ENCODE measurements at regions of chr14 and their contacts with region 1.

Region 1: GRCh38 chr14:61837336-61838229 is 75.4 kb downstream of the SNAPC1 start:
- DNase-seq: peak; percentile 84
- ATAC-seq: peak; percentile 97
- H3K4me3 ChIP-seq: no peak overlapping the region
- H3K4me3 Mint-ChIP-seq: no peak overlapping the region
- H3K27ac ChIP-seq: no peak overlapping the region
- H3K27ac Mint-ChIP-seq: no peak overlapping the region
- H3K4me1 ChIP-seq: peaks cover 0 to 7% of the 10 kb centered on the region in 2 donors
- H3K4me1 Mint-ChIP-seq: no peaks in the 10 kb centered on the region
- H3K27me3 ChIP-seq: no peaks in the 10 kb centered on the region
- H3K27me3 Mint-ChIP-seq: peaks cover 5% of the 10 kb centered on the region
- CTCF ChIP-seq: peak; percentile 93

Region 2: GRCh38 chr14:61456720-61457119 is 380.9 kb before region 1 on chr14:
- CTCF ChIA-PET with region 1: interaction called, 287 read pairs
- POLR2A ChIA-PET with region 1: no interaction called
- intact Hi-C with region 1: loop called (anchors 1 kb)
- DNase-seq: peak; percentile 89
- ATAC-seq: peak; percentile 87
- H3K4me3 ChIP-seq: no peak overlapping the region
- H3K4me3 Mint-ChIP-seq: no peak overlapping the region
- H3K27ac ChIP-seq: no peak overlapping the region
- H3K27ac Mint-ChIP-seq: no peak overlapping the region
- H3K4me1 ChIP-seq: peaks cover 4 to 11% of the 10 kb centered on the region in 2 donors
- H3K4me1 Mint-ChIP-seq: peaks cover 13% of the 10 kb centered on the region
- H3K27me3 ChIP-seq: no peaks in the 10 kb centered on the region
- H3K27me3 Mint-ChIP-seq: no peaks in the 10 kb centered on the region
- CTCF ChIP-seq: peak; percentile 89

Region 3: DNA sequence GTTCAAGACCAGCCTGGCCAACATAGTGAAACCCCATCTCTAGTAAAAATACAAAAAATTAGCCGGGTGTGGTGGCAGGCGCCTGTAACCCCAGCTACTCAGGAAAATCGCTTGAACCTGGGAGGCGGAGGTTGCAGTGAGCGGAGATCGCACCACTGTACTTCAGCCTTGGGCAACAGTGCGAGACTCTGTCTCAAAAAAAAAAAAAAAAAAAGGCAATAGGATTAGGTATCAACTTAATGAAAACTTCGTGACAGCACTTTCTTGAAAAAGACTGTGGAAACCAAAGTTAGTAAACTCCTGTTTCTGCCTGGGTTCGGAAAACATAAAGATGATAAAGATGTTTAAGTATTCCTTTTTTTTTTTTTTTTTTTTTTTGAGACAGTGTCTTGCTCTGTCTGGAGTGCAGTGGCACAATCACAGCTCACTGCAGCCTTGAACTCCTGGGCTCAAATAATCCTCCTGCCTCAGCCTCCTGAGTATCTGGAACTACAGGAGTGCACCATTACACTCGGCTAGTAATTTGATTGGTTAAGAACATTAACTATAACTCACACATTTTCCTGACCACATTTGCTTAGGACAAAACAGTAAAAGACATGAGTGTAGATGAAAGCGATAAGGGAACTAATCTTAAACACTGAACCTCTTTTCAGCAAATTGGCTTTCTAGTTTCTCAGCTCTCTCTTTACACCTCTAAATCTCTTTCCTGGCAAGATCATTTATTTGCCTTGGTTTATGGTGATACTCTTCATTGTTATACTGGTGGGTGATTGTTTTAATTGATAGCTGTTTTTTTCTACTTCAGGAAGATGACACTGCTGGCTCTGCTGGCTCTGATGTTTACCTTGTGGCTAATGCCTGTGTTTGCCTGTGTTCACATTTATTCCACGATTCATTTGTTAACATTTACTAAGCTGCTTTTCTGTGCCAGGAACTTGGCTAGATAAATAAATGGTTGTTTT is 126.4 kb before region 1 on chr14:
- CTCF ChIA-PET with region 1: interaction called, 10 read pairs
- POLR2A ChIA-PET with region 1: no interaction called
- intact Hi-C with region 1: no loop called
- DNase-seq: peak; percentile 32
- ATAC-seq: peak; percentile 60
- H3K4me3 ChIP-seq: no peak overlapping the region
- H3K4me3 Mint-ChIP-seq: peak overlapping the region; percentile 63
- H3K27ac ChIP-seq: peak overlapping the region in 1 of 2 donors; percentile 17
- H3K27ac Mint-ChIP-seq: peak overlapping the region; percentile 21
- H3K4me1 ChIP-seq: peaks cover 46 to 59% of the 10 kb centered on the region in 2 donors
- H3K4me1 Mint-ChIP-seq: peaks cover 80% of the 10 kb centered on the region
- H3K27me3 ChIP-seq: no peaks in the 10 kb centered on the region
- H3K27me3 Mint-ChIP-seq: no peaks in the 10 kb centered on the region
- CTCF ChIP-seq: no peak

Region 4: DNA sequence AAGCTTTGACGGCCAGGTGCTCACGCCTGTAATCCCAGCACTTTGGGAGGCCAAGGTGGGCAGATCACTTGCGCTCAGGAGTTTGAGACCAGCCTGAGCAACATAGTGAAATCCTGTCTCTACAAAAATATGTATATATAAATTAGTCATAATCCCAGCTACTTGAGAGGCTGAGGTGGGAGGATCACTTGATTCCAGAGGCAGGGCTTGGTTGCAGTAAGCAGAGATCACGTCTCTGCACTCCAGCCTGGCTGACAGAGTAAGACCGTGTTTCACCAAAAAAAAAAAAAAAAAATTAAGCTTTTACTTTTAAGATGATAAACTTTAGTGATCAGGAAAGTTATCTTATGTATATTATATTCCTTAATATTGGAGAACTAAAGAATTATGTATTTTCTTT is 93.3 kb before region 1 on chr14:
- CTCF ChIA-PET with region 1: interaction called, 13 read pairs
- POLR2A ChIA-PET with region 1: no interaction called
- intact Hi-C with region 1: no loop called
- DNase-seq: no peak
- ATAC-seq: no peak
- H3K4me3 ChIP-seq: no peak overlapping the region
- H3K4me3 Mint-ChIP-seq: no peak overlapping the region
- H3K27ac ChIP-seq: no peak overlapping the region
- H3K27ac Mint-ChIP-seq: no peak overlapping the region
- H3K4me1 ChIP-seq: no peaks in the 10 kb centered on the region
- H3K4me1 Mint-ChIP-seq: peaks cover 8% of the 10 kb centered on the region
- H3K27me3 ChIP-seq: no peaks in the 10 kb centered on the region
- H3K27me3 Mint-ChIP-seq: no peaks in the 10 kb centered on the region
- CTCF ChIP-seq: no peak

Region 5: DNA sequence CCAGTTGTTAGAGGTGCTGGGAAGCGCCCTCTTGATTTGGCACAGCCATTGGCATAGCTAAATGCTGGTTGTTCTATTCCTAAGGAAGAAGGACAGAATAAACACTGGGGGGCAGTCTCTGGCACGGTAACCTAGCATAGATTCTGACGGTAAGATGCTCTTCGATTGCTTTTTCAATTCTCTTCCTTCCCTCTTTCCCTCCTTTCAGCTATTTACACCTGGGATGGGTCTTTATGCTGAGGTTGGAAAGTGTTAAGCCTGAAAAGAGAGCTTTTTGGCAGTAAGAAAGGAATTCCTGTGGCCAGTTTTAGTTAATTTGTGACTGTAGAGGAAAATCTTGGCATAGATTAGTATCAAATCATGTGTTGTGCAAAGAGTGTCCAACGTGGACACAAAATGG is 87.5 kb after region 1 on chr14:
- CTCF ChIA-PET with region 1: interaction called, 10 read pairs
- POLR2A ChIA-PET with region 1: no interaction called
- intact Hi-C with region 1: no loop called
- DNase-seq: peak; percentile 70
- ATAC-seq: peak; percentile 65
- H3K4me3 ChIP-seq: no peak overlapping the region
- H3K4me3 Mint-ChIP-seq: no peak overlapping the region
- H3K27ac ChIP-seq: no peak overlapping the region
- H3K27ac Mint-ChIP-seq: peak overlapping the region; percentile 23
- H3K4me1 ChIP-seq: peaks cover 3 to 8% of the 10 kb centered on the region in 2 donors
- H3K4me1 Mint-ChIP-seq: peaks cover 29% of the 10 kb centered on the region
- H3K27me3 ChIP-seq: peaks cover 0 to 4% (median 0%) of the 10 kb centered on the region in 4 experiments
- H3K27me3 Mint-ChIP-seq: peaks cover 3% of the 10 kb centered on the region
- CTCF ChIP-seq: peak; percentile 66

Region 6: DNA sequence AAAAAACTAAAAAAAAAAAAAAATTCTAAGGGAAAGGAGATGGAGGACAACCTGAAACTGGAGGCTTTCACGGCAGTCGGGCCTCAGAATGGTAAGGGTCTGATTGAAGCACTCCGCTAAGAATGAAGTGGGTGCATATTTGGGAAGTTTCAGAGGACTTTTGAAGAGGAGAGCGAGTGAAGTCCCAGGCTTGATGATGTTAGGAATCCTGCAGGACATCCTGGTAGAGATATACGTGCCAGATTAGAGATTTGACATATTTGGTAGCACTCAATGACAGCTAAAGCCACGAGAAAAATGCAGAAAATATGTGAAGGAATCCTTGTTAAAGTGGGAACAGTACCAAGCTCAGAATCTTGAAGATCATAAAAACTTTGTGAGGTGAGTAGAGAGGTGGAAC is 110.8 kb after region 1 on chr14:
- CTCF ChIA-PET with region 1: no interaction called
- POLR2A ChIA-PET with region 1: no interaction called
- intact Hi-C with region 1: no loop called
- DNase-seq: no peak
- ATAC-seq: no peak
- H3K4me3 ChIP-seq: no peak overlapping the region
- H3K4me3 Mint-ChIP-seq: no peak overlapping the region
- H3K27ac ChIP-seq: no peak overlapping the region
- H3K27ac Mint-ChIP-seq: no peak overlapping the region
- H3K4me1 ChIP-seq: no peaks in the 10 kb centered on the region
- H3K4me1 Mint-ChIP-seq: no peaks in the 10 kb centered on the region
- H3K27me3 ChIP-seq: no peaks in the 10 kb centered on the region
- H3K27me3 Mint-ChIP-seq: peaks cover 1% of the 10 kb centered on the region
- CTCF ChIP-seq: no peak